Activated CD4-positive, alpha-beta T cell treated with anti-CD3 and anti-CD28 coated beads for 36 hours (primary cell): ENCODE measurements at regions of chr20 and their contacts with region 1.

Region 1: DNA sequence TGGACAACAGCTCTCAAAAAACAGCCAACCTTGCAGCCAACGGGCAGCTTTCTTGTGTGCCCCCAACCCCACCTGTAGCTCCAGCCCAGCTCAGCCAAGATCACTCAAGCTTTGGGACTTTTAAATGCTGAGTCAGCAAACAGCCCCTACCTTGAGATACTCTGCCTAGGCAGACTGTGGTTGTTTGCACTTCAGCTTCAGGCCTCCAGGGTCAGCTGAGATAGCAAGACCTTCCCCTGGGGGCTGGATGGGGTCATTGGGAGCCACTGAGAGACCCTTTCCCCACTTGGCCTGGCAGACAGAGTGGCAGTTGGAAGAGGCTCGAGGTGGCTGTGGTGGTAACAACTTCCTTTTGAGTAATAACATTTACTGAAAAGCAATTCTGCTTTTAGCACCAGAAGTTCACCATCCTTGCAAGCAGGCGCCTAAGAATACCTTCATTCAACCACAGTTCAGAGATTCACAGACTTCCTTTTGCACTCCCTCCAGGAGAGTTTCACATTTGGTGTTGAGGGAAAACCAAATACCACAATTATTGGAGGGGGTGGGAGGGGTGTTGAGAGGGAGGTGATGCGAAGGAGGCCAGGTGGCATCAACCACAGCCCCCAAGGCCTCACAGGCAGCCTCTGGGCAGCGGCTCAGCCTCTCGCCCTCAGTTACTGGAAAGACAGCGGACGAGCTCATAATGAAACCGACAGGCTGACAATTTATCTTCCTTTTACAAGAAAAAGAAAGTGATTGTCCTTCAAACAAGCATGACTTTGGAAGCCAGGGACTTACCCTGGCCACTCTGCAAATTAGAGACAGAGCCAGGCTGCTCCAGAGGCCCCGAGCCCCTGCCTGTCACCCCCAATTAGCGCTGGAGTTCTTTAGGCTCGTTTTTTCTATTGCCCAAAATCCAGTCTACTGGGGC is 148.1 kb downstream of the CEBPB start:
- DNase-seq: peak; percentile 92
- ATAC-seq: peak; percentile 74
- H3K4me3 Mint-ChIP-seq: peak overlapping the region; percentile 55
- H3K27ac Mint-ChIP-seq: peak overlapping the region; percentile 97
- H3K4me1 Mint-ChIP-seq: peaks cover 61% of the 10 kb centered on the region
- H3K27me3 Mint-ChIP-seq: no peaks in the 10 kb centered on the region

Region 2: DNA sequence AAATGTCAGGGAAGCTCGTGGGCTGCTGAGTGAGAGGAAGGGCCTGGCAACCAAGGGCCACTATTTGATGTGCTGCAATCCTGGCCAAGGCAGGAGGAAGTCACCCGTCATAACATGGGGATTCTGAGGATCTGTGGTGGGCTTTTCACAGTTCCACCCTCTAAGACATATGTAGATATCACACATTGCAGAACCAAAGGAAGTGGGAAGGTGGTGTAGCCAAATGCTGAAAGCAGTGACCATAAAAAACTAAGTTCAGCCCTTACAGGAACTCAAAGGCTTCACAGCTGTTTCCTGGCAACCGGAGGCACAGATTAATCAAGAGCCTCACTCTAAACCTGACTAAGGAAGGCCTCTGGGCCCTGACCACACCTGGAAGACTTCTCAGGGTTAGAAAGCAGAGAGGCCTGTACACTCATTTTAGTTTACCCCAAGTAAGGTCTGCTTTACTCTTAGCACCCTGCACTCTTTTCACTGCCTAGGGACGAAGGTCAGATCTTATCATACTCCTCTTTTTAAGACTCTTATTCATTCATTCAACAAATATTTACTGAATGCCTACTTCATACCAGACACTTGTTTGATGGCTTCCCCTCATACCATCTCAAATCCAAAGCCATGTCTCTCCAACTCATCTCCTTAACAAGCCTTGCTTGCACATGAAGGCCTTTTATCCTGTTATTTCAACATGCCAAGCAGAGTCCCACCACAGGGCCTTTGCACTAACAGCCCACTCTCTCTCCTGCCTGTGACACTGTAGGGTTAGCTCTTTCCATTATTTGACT is 228.4 kb before region 1 on chr20:
- CTCF ChIA-PET with region 1: no interaction called
- POLR2A ChIA-PET with region 1: no interaction called
- intact Hi-C with region 1: loop called in 1 of 2 experiments (anchors 2 kb)
- DNase-seq: peak; percentile 69
- ATAC-seq: peak; percentile 49
- H3K4me3 Mint-ChIP-seq: peak overlapping the region; percentile 93
- H3K27ac Mint-ChIP-seq: peak overlapping the region; percentile 92
- H3K4me1 Mint-ChIP-seq: peaks cover 82% of the 10 kb centered on the region
- H3K27me3 Mint-ChIP-seq: no peaks in the 10 kb centered on the region

Region 3: DNA sequence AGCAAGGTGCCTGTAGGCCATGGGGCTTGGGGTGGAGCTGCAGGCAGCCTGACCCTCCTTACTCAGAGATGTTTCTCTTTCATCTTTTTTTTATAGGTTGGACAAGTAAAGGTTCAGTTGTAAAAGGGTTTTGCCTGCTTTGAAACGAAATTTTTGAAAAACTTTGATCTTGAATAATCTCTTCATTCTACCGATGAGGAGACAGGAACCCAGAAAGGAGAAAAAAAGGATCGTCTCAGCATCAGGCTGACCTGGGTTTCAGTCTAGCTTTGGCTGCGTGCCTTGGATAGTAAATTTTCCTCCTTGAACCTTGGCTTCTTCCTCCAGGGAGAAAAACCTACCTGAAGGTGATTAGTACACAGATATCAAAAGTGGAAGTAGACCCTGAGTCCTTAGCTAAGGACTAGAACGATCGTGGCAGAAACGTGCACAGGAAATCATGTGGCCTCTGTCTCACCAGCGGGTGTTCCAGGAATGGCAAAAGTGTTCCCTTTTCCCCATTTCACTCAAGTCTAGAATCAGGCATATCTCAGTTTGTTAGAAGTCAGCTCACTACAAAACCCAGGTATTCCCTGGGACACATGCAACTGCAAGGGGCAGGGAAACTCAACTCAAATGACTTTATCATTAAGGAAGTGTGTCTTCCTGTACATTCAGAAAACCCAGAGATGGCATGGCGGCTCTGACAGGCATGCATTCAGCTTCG is 43.3 kb after region 1 on chr20:
- CTCF ChIA-PET with region 1: no interaction called
- POLR2A ChIA-PET with region 1: no interaction called
- intact Hi-C with region 1: loop called (anchors 2 kb)
- DNase-seq: peak; percentile 53
- ATAC-seq: peak; percentile 52
- H3K4me3 Mint-ChIP-seq: peak overlapping the region; percentile 35
- H3K27ac Mint-ChIP-seq: peak overlapping the region; percentile 86
- H3K4me1 Mint-ChIP-seq: peaks cover 46% of the 10 kb centered on the region
- H3K27me3 Mint-ChIP-seq: no peaks in the 10 kb centered on the region

Region 4: GRCh38 chr20:50427740-50428462 is 89.2 kb after region 1 on chr20:
- CTCF ChIA-PET with region 1: no interaction called
- POLR2A ChIA-PET with region 1: no interaction called
- intact Hi-C with region 1: no loop called
- DNase-seq: no peak
- ATAC-seq: peak; percentile 33
- H3K4me3 Mint-ChIP-seq: no peak overlapping the region
- H3K27ac Mint-ChIP-seq: no peak overlapping the region
- H3K4me1 Mint-ChIP-seq: no peaks in the 10 kb centered on the region
- H3K27me3 Mint-ChIP-seq: peaks cover 6% of the 10 kb centered on the region

Region 5: GRCh38 chr20:50460460-50461267 is 121.9 kb after region 1 on chr20:
- CTCF ChIA-PET with region 1: interaction called, 4 read pairs
- POLR2A ChIA-PET with region 1: no interaction called
- intact Hi-C with region 1: loop called (anchors 5 kb)
- DNase-seq: peak; percentile 91
- ATAC-seq: peak; percentile 90
- H3K4me3 Mint-ChIP-seq: no peak overlapping the region
- H3K27ac Mint-ChIP-seq: no peak overlapping the region
- H3K4me1 Mint-ChIP-seq: peaks cover 8% of the 10 kb centered on the region
- H3K27me3 Mint-ChIP-seq: peaks cover 6% of the 10 kb centered on the region

Region 6: DNA sequence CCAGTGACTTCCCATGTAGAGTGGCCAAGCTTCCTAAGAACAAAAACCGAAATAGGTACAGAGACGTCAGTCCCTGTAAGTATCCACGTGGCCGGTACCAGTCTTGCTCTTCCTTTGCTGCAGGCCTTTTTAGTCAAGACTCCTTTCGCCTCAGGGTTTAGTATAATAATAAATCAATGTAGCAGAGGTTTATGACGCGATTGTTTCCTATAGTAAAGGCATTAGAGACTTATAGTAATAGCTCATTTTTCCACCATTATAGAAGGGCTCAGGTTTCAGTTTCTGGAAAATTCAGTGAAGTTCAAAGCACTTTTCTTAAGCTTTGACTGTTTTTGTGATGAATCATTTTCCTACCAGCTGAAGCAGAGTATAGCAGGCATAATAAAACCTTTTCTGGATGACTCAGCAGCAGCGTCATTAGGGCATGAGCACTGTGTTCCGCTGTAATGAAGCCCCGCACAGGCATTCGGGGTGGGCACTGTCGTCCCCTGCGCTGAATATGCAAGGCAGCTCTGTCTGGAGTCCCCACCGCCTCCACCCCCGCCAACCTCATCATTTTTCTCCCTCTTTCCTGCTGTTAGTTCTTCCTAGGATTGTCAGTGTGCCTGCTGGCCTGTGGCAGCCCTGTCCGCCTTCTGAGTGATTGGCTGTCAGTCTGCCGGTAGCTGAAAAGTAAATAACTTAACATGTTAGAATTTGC is 222.8 kb after region 1 on chr20:
- CTCF ChIA-PET with region 1: no interaction called
- POLR2A ChIA-PET with region 1: interaction called, 3 read pairs
- intact Hi-C with region 1: loop called in 1 of 2 experiments (anchors 1 kb)
- DNase-seq: peak; percentile 85
- ATAC-seq: peak; percentile 84
- H3K4me3 Mint-ChIP-seq: peak overlapping the region; percentile 76
- H3K27ac Mint-ChIP-seq: peak overlapping the region; percentile 99
- H3K4me1 Mint-ChIP-seq: peaks cover 85% of the 10 kb centered on the region
- H3K27me3 Mint-ChIP-seq: no peaks in the 10 kb centered on the region

Region 7: GRCh38 chr20:50575847-50576720 is 237.3 kb after region 1 on chr20:
- CTCF ChIA-PET with region 1: no interaction called
- POLR2A ChIA-PET with region 1: no interaction called
- intact Hi-C with region 1: loop called in 1 of 2 experiments (anchors 10 kb)
- DNase-seq: peak; percentile 83
- ATAC-seq: peak; percentile 89
- H3K4me3 Mint-ChIP-seq: no peak overlapping the region
- H3K27ac Mint-ChIP-seq: peak overlapping the region; percentile 16
- H3K4me1 Mint-ChIP-seq: peaks cover 44% of the 10 kb centered on the region
- H3K27me3 Mint-ChIP-seq: no peaks in the 10 kb centered on the region

Region 8: GRCh38 chr20:51404298-51405060 is 1065.7 kb after region 1 on chr20:
- CTCF ChIA-PET with region 1: no interaction called
- POLR2A ChIA-PET with region 1: no interaction called
- intact Hi-C with region 1: loop called in 1 of 2 experiments (anchors 5 kb)
- DNase-seq: peak; percentile 94
- ATAC-seq: peak; percentile 81
- H3K4me3 Mint-ChIP-seq: peak overlapping the region; percentile 1
- H3K27ac Mint-ChIP-seq: peak overlapping the region; percentile 96
- H3K4me1 Mint-ChIP-seq: peaks cover 89% of the 10 kb centered on the region
- H3K27me3 Mint-ChIP-seq: no peaks in the 10 kb centered on the region